ENCODE measurements at regions of chr10 and their contacts with region 1.

Region 1: DNA sequence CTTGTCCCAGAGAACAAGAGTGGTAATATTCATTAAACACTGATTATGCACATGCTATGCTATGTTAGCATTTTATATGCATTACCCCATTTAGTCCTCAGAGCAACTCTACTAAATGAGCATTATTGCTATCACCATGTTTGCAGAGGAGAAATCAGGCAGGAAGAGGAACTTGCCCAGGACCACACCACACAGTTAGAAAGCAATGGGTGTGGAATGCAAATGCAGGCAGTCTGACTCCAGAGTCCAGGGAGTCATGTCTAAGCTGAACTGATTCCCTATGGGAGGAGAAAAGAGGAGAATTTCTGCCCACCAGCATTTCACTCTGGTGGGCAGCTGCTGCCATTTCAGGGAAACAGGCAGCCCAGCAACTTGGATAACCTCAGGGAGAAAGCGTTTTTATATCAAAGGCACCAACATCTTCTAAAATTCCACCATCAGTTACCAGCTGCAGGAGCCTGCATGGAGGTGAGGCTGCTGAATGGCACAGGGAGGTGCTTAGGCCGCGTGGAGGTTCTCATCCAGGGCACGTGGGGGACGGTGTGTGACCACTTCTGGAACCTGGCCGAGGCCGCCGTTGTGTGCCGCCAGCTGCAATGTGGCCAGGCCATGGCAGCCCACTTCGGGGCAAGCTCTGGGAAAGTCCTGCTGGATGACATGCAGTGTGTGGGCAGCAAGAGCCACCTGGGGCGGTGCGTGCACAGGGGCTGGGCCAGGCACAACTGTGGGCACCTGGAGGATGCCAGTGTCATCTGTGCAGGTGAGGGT is 68.2 kb upstream of the C10orf120 start:
- DNase-seq: no peak
- H3K4me3 ChIP-seq: no peak overlapping the region
- H3K27ac ChIP-seq: no peak overlapping the region
- H3K4me1 ChIP-seq: no peaks in the 10 kb centered on the region
- H3K27me3 ChIP-seq: peaks cover 5% of the 10 kb centered on the region
- CTCF ChIP-seq: no peak

Region 2: DNA sequence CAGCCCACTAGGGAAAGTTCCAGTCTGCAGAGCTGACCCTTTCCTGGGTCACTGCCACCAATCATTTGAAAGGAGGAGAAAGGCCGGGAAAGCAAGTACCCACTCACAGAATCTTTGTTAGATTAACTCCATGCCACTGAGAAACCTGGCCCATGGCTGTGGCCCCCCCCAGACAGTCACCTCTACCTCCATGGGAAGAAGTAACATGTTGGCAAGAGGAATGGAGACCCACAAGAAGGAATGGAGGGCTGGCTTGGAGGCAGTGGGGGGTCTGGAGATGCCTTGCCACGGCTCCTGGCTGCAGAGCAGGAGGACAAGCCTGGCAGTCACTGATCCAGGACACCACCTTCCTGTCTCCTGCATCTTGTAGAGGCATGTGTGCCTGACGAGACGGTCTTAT is 44.9 kb after region 1 on chr10:
- CTCF ChIA-PET with region 1: no interaction called
- dilution Hi-C with region 1: no loop called
- in situ Hi-C with region 1: no loop called
- intact Hi-C with region 1: no loop called
- DNase-seq: no peak
- H3K4me3 ChIP-seq: no peak overlapping the region
- H3K27ac ChIP-seq: no peak overlapping the region
- H3K4me1 ChIP-seq: no peaks in the 10 kb centered on the region
- H3K27me3 ChIP-seq: peaks cover 6% of the 10 kb centered on the region
- CTCF ChIP-seq: no peak

Region 3: GRCh38 chr10:122822973-122823690 is 55.3 kb after region 1 on chr10:
- CTCF ChIA-PET with region 1: no interaction called
- dilution Hi-C with region 1: loop called (anchors 10 kb)
- in situ Hi-C with region 1: no loop called
- intact Hi-C with region 1: no loop called
- DNase-seq: no peak
- H3K4me3 ChIP-seq: no peak overlapping the region
- H3K27ac ChIP-seq: no peak overlapping the region
- H3K4me1 ChIP-seq: no peaks in the 10 kb centered on the region
- H3K27me3 ChIP-seq: peaks cover 21% of the 10 kb centered on the region
- CTCF ChIP-seq: no peak

Measured in mammary epithelial cell (primary cell).